K562 (cell line): ENCODE measurements at regions of chr1 and their contacts with region 1.

Region 1: DNA sequence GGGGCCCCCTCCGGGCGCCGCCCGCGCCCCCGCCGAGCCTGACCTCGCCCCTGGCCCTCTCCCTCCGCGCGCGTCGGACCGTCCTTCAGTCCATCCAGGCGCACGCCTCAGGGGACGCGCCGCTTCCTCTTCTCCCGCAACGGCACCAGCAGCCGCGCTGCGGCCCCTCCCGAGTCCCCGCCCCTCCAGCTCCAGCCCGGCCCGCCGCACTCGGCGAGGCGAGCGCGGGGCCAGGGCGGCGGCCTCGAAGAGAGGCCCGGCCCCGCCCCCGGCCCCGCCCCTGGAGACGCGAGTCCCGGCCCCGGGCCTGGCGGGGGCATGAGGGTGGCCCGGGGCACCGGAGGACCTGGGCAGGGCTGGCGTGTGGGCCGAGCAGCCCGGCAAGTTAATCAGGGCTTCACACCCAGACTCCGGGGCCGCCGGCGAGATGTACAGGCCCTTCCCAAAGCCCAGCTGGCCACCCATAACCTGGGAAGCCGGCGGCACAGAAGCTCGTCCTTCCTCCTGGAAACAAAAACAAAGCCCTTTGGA is at the start of gene IGSF3:
- DNase-seq: peak; percentile 93 to 97 (median 95)
- ATAC-seq: peak; percentile 97
- H3K4me3 ChIP-seq: peak within 1 kb of the TSS; percentile 61
- H3K27ac ChIP-seq: peak within 1 kb of the TSS; percentile 30; the same call in 1 of the 3 replicates
- H3K4me1 ChIP-seq: peaks cover 17 to 20% of the 10 kb centered on the region in 2 experiments
- H3K27me3 ChIP-seq: no peaks in the 10 kb centered on the region
- CTCF ChIP-seq: no peak; a peak in 1 of 6 replicates
- EP300 ChIP-seq: no peak
- POLR2A ChIP-seq: no peak; the same call in 1 of the 2 replicates
- RAD21 ChIP-seq: no peak
- polyA plus RNA-seq, gene IGSF3: 1.1 to 1.2 TPM

Region 2: GRCh38 chr1:116628448-116628847 is 39.2 kb before region 1 on chr1:
- CTCF ChIA-PET with region 1: no interaction called
- POLR2A ChIA-PET with region 1: interaction called, 3 read pairs
- in situ Hi-C with region 1: no loop called
- intact Hi-C with region 1: loop called (anchors 5 kb)
- DNase-seq: no peak
- ATAC-seq: no peak
- H3K4me3 ChIP-seq: no peak overlapping the region
- H3K27ac ChIP-seq: no peak overlapping the region
- H3K4me1 ChIP-seq: peaks cover 26 to 53% of the 10 kb centered on the region in 2 experiments
- H3K27me3 ChIP-seq: no peaks in the 10 kb centered on the region
- CTCF ChIP-seq: no peak
- EP300 ChIP-seq: no peak
- POLR2A ChIP-seq: no peak
- RAD21 ChIP-seq: no peak